Heart left ventricle (tissue), 16 donors: ENCODE measurements at regions of chr4 and their contacts with region 1.

Region 1: DNA sequence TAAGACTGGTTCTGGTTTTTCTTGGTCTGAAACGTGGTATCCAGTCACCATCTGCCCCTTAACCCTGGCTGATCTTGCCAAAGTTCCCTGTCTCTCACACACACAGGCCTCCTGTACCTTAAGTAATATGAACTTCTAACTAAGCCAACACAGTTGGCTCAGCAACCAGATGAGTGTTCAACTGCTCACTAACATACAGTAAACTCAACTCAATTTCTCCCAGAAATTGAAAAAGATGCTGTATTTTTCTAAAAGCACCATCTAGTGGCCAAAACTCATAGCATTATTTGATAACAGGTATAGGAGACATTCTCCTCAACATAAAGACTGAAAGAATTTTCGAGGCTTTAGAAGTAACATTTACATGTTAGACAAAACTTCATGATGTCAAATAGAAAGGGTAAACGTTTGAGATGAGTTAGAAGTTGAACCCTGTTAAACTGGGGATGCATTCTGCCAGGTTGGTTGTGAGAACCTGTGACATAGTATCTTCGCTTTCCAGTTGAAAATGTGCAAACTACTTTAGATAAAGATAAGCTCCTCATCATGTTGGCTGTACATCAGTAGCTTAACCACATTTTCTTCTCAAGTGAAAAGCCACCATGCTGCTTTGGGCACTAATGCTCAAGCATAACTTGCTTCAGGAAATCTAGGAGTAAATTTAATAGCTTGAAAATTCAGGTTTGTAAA is 31.2 kb downstream of the CCNI start:
- DNase-seq: no peak
- ATAC-seq: peak in 1 of 4 donors; percentile 29
- H3K4me3 ChIP-seq: no peak overlapping the region
- H3K27ac ChIP-seq: peak overlapping the region in 1 of 12 donors; percentile 25
- H3K4me1 ChIP-seq: peaks cover 0 to 19% (median 0%) of the 10 kb centered on the region in 12 donors
- H3K27me3 ChIP-seq: no peaks in the 10 kb centered on the region
- CTCF ChIP-seq: peak; percentile 40 to 67 (median 54)
- POLR2A ChIP-seq: no peak

Region 2: GRCh38 chr4:77001907-77002306 is 42.7 kb before region 1 on chr4:
- intact Hi-C with region 1: loop called in 1 of 10 experiments (anchors 5 kb)
- DNase-seq: no peak
- ATAC-seq: peak in 2 of 4 donors; percentile 44 to 45
- H3K4me3 ChIP-seq: no peak overlapping the region
- H3K27ac ChIP-seq: peak overlapping the region in 4 of 12 donors; percentile 6 to 50 (median 18)
- H3K4me1 ChIP-seq: peaks cover 11 to 34% (median 24%) of the 10 kb centered on the region in 12 donors
- H3K27me3 ChIP-seq: no peaks in the 10 kb centered on the region
- CTCF ChIP-seq: no peak
- POLR2A ChIP-seq: no peak

Region 3: GRCh38 chr4:77203380-77204197 is 159.0 kb after region 1 on chr4:
- intact Hi-C with region 1: loop called in 5 of 10 experiments (anchors 5 kb)
- DNase-seq: peak in 4 of 5 donors; percentile 44 to 65 (median 54)
- ATAC-seq: peak; percentile 47 to 85 (median 82)
- H3K4me3 ChIP-seq: no peak overlapping the region
- H3K27ac ChIP-seq: no peak overlapping the region
- H3K4me1 ChIP-seq: peaks cover 0 to 4% (median 0%) of the 10 kb centered on the region in 12 donors
- H3K27me3 ChIP-seq: peaks cover 0 to 4% (median 0%) of the 10 kb centered on the region in 9 donors
- CTCF ChIP-seq: peak; percentile 54 to 83 (median 74)
- POLR2A ChIP-seq: no peak